ENCODE measurements at regions of chr19 and their contacts with region 1.

Region 1: DNA sequence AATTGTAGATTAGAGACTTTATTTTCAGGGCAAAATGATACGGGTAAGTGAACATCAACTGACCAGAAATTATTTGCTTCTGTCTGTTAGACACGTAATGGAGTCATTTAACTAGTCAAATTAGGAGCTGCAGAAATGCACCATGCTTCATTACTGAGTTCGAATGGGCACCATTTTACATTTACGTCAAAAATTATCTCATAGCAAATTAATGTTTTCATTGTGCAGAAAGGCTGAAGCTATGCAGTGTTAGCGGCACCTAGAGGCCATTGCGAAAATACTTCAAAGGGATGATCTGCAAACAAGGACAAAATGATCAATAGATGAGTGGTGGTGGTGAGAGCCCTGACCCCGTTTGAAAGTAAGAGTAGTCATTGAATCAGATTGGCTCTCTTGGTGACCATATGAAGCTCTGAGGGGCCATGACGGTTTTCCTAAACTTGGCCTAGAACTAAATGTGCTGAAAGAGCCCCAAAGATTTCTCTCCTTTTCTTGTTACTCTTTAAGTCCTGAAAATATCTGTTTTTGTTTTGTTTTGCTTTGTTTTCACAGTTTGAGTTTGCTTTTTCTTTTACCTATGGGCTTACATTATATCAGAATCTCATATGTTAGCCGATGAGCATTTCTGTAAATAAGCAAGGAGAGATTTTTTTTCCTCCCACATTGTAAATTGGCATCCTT is 277.9 kb downstream of the ZNF536 start:
- DNase-seq: peak in 1 of 2 experiments; percentile 12
- H3K4me3 ChIP-seq: no peak overlapping the region
- H3K27ac ChIP-seq: no peak overlapping the region
- H3K4me1 ChIP-seq: no peaks in the 10 kb centered on the region
- H3K27me3 ChIP-seq: peaks cover 77% of the 10 kb centered on the region
- CTCF ChIP-seq: peak; percentile 81

Region 2: GRCh38 chr19:29878973-29879654 is 771.0 kb before region 1 on chr19:
- CTCF ChIA-PET with region 1: no interaction called
- POLR2A ChIA-PET with region 1: no interaction called
- intact Hi-C with region 1: loop called (anchors 5 kb)
- DNase-seq: peak; percentile 20 to 80
- H3K4me3 ChIP-seq: no peak overlapping the region
- H3K27ac ChIP-seq: no peak overlapping the region
- H3K4me1 ChIP-seq: 0 out of 2 replicates have a peak, but pooled peaks cover 6% of the 10 kb centered on the region
- H3K27me3 ChIP-seq: peaks cover 20% of the 10 kb centered on the region
- CTCF ChIP-seq: no peak

Region 3: DNA sequence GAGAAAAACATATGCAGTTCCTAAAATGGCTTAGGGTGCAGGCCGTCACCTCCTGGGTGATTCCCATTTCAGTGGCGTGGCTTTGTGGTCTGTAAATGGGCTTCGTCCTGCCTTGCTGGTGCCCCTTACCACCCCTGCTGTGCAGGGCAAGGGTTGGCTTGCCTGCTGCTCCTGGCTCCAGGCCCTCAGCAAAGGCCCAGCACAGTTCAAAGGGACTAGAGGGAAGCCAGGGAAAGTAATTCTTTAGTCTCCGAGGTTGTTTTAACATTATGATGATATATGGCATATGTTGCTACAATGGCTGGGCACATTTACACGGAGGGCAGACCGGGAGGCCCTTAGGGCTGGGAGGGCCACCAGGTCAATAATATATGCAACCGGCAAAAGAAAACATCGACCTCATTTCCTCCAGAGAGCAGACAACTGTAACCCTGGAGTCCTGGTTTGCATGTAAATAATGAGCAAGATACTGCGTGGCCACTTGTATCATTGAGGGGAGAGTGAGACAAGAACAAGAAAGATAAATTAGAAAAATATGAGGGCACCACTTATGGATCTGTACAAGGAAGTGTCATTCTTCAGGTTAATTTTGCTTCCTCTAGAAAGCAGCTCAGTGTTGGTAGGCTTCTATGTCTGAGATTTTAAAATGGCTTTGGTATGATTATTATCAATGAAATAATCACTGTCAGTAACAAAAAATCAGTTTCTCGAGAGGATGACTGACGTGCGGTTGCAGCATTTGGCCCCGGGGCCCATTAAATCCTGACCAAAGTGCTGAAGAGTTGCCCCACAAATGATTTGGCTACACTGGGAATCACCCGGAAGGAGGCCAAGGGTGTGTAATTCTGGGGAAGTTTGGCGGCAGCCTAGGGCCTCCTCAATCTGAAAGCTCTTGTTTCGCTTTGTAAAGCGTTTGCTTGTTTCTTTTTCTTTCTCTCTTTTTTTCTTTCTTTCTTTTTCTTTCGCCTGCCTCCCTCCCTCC is 740.8 kb before region 1 on chr19:
- CTCF ChIA-PET with region 1: interaction called, 14 read pairs
- POLR2A ChIA-PET with region 1: no interaction called
- intact Hi-C with region 1: no loop called
- DNase-seq: no peak
- H3K4me3 ChIP-seq: no peak overlapping the region
- H3K27ac ChIP-seq: no peak overlapping the region
- H3K4me1 ChIP-seq: no peaks in the 10 kb centered on the region
- H3K27me3 ChIP-seq: peaks cover 35% of the 10 kb centered on the region; the same call in 1 of the 2 replicates
- CTCF ChIP-seq: no peak

Region 4: DNA sequence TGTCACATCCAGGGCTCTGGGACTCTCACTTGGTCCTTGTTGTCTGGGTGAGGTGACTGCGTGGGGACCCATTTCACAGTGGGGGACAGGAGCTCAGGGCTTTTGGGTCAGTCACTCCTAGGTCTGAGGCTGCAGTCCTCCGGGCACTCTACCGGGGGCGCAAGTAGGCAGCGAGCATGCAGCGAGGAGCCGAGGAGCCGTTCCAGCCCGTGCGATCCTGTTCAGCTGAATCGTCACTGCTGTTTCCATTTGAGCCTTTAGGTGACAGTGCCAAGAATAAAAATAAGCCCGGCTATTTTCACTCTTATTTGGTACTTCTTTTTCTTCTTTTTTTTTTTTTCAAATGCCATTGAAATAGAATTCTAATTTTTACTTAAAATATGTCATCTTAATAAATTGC is 151.4 kb before region 1 on chr19:
- CTCF ChIA-PET with region 1: no interaction called
- POLR2A ChIA-PET with region 1: no interaction called
- intact Hi-C with region 1: no loop called
- DNase-seq: no peak
- H3K4me3 ChIP-seq: no peak overlapping the region
- H3K27ac ChIP-seq: no peak overlapping the region
- H3K4me1 ChIP-seq: no peaks in the 10 kb centered on the region
- H3K27me3 ChIP-seq: peaks cover 16% of the 10 kb centered on the region; the same call in 1 of the 2 replicates
- CTCF ChIP-seq: no peak

Region 5: DNA sequence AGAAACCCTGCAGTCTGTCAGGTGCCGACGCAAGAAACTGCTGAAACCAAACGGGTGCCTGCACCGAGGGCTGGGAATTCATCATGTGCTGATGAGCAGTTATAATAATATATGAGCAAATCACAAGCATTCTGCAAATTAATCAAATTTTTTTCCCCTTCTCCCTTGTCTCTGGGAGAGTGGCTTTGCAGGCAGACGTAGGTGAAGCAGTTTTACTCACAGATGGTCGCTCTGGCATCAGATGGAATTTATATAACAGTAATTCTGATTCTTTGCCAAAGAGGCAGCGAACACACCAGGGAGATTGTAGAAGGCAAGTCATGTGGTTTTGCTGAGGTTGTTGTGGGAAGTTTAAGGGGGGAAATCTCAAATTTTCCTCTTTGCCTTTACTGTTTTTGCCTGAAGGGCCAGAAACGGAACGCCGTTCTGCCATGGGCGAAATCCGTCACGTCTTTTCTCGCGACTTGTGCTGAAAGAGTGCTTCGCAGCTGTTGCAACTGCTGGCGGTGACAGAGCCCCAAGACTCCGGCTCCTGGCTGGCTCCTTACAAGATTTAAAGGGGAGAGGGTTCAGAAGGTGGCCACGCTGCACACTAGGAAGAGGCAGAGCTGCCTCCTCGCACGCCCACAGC is 42.2 kb after region 1 on chr19:
- CTCF ChIA-PET with region 1: no interaction called
- POLR2A ChIA-PET with region 1: no interaction called
- intact Hi-C with region 1: no loop called
- DNase-seq: no peak
- H3K4me3 ChIP-seq: no peak overlapping the region
- H3K27ac ChIP-seq: no peak overlapping the region
- H3K4me1 ChIP-seq: no peaks in the 10 kb centered on the region
- H3K27me3 ChIP-seq: peaks cover 73% of the 10 kb centered on the region
- CTCF ChIP-seq: no peak